Activated T-helper 1 cell treated with anti-CD3 and anti-CD28 coated beads, Interleukin-12 subunit alpha, Interleukin-12 subunit beta, Interleukin-2, Interleukin-4 antibody, amounts not matched to agents 30 ng/mL and 10 ng/mL and 1 ng/mL, durations not matched to agents 14 hours and 24 hours and 36 hours (primary cell): ENCODE measurements at regions of chr7 and their contacts with region 1.

Region 1: DNA sequence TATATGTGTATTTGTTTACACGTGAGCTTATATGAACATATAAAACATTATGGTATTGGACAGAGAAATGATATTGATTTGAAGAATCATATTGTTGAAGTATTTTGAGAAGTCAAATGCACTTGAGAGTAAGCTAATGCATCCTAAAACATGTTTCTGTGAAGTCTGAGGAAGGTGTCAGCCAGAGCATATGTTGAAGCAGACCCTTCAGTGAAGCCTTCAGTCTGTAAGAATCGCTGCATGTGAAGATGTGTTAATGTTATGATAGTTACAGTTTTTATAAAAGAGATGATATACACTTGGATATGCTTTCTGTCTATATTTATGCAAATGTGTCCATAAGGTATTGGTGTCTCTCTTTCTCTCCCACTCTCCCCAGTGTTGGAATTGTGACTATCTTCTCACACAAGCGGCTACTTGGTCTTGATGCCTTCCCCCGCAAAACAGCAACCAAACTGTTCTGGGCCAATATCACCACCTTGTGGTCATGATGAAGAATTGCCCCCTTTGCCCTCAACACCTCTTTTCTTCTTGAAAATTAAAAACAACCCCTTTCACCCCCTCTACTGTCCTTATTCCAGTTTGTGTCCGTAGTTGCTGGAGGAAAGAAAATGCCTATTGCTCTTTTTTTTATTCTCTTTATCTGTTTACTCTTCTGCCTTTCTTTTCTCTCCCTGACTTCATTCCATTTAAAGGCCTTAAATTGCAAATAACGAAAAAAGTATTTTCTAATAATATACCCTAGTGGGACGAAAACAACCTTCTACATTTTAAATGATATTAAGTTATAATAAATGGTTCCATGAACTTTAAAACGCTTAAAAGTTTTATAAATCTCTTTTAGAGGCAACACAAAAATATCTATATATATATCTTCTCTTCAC is 64.9 kb downstream of the IKZF1 start:
- DNase-seq: no peak
- H3K4me3 Mint-ChIP-seq: peak overlapping the region; percentile 45
- H3K27ac Mint-ChIP-seq: peak overlapping the region; percentile 85
- H3K4me1 Mint-ChIP-seq: peaks cover 100% of the 10 kb centered on the region
- H3K27me3 Mint-ChIP-seq: no peaks in the 10 kb centered on the region

Region 2: GRCh38 chr7:50317221-50317678 is 52.1 kb before region 1 on chr7:
- intact Hi-C with region 1: loop called (anchors 1 kb)
- DNase-seq: peak; percentile 53
- H3K4me3 Mint-ChIP-seq: peak overlapping the region; percentile 82
- H3K27ac Mint-ChIP-seq: peak overlapping the region; percentile 93
- H3K4me1 Mint-ChIP-seq: peaks cover 100% of the 10 kb centered on the region
- H3K27me3 Mint-ChIP-seq: no peaks in the 10 kb centered on the region

Region 3: DNA sequence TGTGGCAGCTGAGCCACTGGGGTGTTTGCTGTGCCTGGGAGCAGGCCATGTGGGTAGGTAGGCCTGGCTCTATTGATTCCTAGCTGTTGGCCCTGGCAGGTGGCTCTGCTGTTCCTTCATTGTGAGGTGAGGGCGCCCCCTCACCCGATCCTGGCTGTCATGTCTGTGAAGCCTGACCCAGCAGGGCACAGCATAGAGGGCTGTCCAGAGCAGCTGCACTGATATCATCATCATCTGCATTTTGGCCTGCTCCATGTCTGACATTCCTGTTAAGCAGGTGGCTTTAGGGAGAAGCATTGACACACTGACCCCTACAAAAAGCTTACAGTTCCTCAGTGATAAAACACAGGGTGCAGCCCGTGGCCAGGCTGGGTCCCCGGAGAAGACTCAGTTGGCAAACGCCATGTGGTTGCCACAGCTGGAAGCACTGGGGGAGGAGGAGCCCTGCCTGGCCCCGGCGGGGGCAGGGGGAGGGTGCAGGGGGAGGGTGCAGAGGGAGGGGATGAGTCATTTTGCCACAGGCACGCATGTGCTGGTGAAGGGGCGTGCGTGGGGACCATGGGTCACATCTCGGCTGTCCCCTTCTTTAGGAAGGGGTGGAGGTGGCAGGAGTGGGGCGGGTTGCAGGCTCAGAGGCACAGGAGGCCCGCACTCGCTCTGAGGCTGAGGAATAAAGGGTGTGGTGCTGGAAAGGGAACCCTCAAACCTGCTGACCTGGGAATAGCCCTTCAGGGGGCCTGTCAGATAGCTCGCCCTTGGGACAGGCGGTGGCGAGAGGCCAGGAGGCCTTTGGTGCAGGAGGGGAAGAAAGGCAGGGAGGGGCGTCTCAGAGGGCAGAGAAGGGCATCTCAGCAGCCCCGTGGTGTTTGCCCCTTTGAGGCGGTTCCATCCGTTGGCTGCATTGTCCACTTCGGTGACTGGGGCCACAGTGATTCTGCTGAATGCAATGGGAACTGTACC is 33.3 kb before region 1 on chr7:
- intact Hi-C with region 1: loop called (anchors 1 kb)
- DNase-seq: peak; percentile 71
- H3K4me3 Mint-ChIP-seq: no peak overlapping the region
- H3K27ac Mint-ChIP-seq: no peak overlapping the region
- H3K4me1 Mint-ChIP-seq: peaks cover 33% of the 10 kb centered on the region
- H3K27me3 Mint-ChIP-seq: no peaks in the 10 kb centered on the region

Region 4: DNA sequence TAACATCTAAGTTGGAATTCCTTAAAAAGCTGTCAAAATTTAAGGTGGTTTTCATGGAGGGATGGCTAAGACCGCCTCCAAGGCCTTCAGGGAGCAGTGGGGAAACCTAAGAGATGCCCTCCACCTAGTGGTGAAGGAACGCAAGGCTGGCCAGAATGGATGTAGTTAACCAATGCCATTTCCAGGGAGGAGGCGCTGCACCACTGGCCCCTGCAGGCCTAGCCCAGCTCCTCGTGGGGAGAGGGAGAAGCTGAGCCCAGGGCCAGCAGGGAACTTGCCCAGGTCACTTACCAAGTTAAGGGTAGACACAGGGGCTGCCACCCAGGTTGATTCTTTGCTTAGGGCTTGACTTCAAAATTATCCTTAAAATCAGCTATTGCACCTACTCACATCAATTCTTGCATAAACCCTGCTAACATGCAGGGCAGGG is 48.7 kb after region 1 on chr7:
- intact Hi-C with region 1: loop called (anchors 1 kb)
- DNase-seq: peak; percentile 64
- H3K4me3 Mint-ChIP-seq: no peak overlapping the region
- H3K27ac Mint-ChIP-seq: no peak overlapping the region
- H3K4me1 Mint-ChIP-seq: peaks cover 32% of the 10 kb centered on the region
- H3K27me3 Mint-ChIP-seq: no peaks in the 10 kb centered on the region